PC-3 (cell line): ENCODE measurements at regions of chr2 and their contacts with region 1.

Region 1: GRCh38 chr2:229586746-229587705 is 127.3 kb downstream of the DNER start:
- DNase-seq: peak; percentile 93
- ATAC-seq: peak; percentile 89
- H3K4me3 ChIP-seq: peak overlapping the region; percentile 55
- H3K27ac ChIP-seq: peak overlapping the region; percentile 98
- H3K4me1 ChIP-seq: peaks cover 14% of the 10 kb centered on the region
- H3K27me3 ChIP-seq: no peaks in the 10 kb centered on the region
- CTCF ChIP-seq: peak; percentile 91

Region 2: GRCh38 chr2:229133155-229133772 is 453.8 kb before region 1 on chr2:
- CTCF ChIA-PET with region 1: no interaction called
- POLR2A ChIA-PET with region 1: no interaction called
- intact Hi-C with region 1: loop called (anchors 1 kb)
- DNase-seq: peak; percentile 78
- ATAC-seq: peak; percentile 75
- H3K4me3 ChIP-seq: no peak overlapping the region
- H3K27ac ChIP-seq: no peak overlapping the region
- H3K4me1 ChIP-seq: no peaks in the 10 kb centered on the region
- H3K27me3 ChIP-seq: peaks cover 6% of the 10 kb centered on the region; the same call in 1 of the 2 replicates
- CTCF ChIP-seq: peak; percentile 84

Region 3: DNA sequence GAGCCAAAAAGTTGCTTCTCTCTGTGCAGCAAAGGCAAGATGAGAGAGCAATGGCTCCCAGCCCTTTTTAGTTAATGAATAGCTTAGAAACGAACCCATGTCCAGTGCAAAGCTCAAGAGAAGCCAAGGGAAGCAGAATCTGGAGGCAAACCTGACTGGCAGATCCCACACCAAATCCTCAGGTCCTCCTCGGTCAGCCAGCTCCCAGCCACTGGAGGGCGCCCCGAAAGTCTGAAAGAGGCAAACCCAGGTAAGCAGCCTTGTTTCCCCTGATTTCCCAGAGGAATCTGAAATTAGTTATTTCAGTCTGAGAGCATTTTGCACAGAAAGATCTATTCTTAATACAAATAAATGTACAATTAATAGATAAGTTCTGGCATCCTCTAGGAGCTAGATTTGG is 244.7 kb before region 1 on chr2:
- CTCF ChIA-PET with region 1: no interaction called
- POLR2A ChIA-PET with region 1: interaction called, 7 read pairs
- intact Hi-C with region 1: loop called (anchors 1 kb)
- DNase-seq: peak; percentile 65
- ATAC-seq: peak; percentile 53; the same call in 1 of the 2 replicates
- H3K4me3 ChIP-seq: no peak overlapping the region
- H3K27ac ChIP-seq: no peak overlapping the region
- H3K4me1 ChIP-seq: peaks cover 30% of the 10 kb centered on the region
- H3K27me3 ChIP-seq: no peaks in the 10 kb centered on the region
- CTCF ChIP-seq: peak; percentile 82

Region 4: DNA sequence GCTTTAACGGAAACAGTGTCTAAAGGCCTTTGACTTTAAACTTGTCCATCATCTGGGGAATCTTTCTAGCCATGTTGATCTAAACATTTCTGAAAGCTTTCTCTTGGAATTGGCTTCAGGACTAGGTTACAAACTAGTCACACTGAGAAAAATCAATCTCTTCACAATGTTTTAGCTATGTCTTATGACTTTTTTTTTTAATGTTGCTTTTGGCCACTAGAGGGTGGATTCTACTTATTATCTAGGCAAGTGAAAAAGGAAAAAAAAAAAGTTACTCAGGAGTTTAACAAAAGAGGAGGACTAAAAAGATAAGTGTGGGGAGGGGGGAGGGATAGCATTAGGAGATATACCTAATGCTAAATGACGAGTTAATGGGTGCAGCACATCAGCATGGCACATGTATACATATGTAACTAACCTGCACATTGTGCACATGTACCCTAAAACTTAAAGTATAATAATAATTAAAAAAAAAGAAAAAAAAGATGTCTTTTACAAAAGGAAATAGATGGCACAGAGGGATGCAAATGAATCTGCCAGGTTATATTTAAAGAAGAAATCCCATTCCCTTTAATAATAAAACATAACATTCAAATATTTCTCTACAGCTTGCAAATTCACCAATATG is 155.6 kb before region 1 on chr2:
- CTCF ChIA-PET with region 1: interaction called, 46 read pairs
- POLR2A ChIA-PET with region 1: interaction called, 9 read pairs
- intact Hi-C with region 1: loop called (anchors 1 kb)
- DNase-seq: peak; percentile 78
- ATAC-seq: peak; percentile 40; the same call in 1 of the 2 replicates
- H3K4me3 ChIP-seq: no peak overlapping the region
- H3K27ac ChIP-seq: no peak overlapping the region
- H3K4me1 ChIP-seq: peaks cover 7% of the 10 kb centered on the region; the same call in 1 of the 2 replicates
- H3K27me3 ChIP-seq: no peaks in the 10 kb centered on the region
- CTCF ChIP-seq: peak; percentile 67

Region 5: GRCh38 chr2:229714736-229715541 is 127.9 kb after region 1 on chr2:
- CTCF ChIA-PET with region 1: interaction called, 7 read pairs
- POLR2A ChIA-PET with region 1: no interaction called
- intact Hi-C with region 1: loop called (anchors 1 kb)
- DNase-seq: peak; percentile 55
- ATAC-seq: peak; percentile 78
- H3K4me3 ChIP-seq: peak overlapping the region; percentile 66
- H3K27ac ChIP-seq: no peak overlapping the region
- H3K4me1 ChIP-seq: peaks cover 6% of the 10 kb centered on the region; the same call in 1 of the 2 replicates
- H3K27me3 ChIP-seq: peaks cover 36% of the 10 kb centered on the region
- CTCF ChIP-seq: no peak